Activated CD8-positive, alpha-beta memory T cell treated with anti-CD3 and anti-CD28 coated beads, Interleukin-2, amount 10 ng/mL, durations not matched to agents 7 days and 5 days (primary cell): ENCODE measurements at regions of chr11 and their contacts with region 1.

Region 1: GRCh38 chr11:13276832-13277767 is 490 bp upstream of the BMAL1 start:
- DNase-seq: peak; percentile 98
- ATAC-seq: peak; percentile 89
- H3K4me3 Mint-ChIP-seq: peak overlapping the region; percentile 92
- H3K27ac Mint-ChIP-seq: peak overlapping the region; percentile 89
- H3K4me1 Mint-ChIP-seq: peaks cover 45% of the 10 kb centered on the region
- H3K27me3 Mint-ChIP-seq: peaks cover 35% of the 10 kb centered on the region

Region 2: GRCh38 chr11:13297917-13298356 is 20.8 kb after region 1 on chr11:
- CTCF ChIA-PET with region 1: interaction called, 20 read pairs
- DNase-seq: peak; percentile 91
- ATAC-seq: peak; percentile 95
- H3K4me3 Mint-ChIP-seq: peak overlapping the region; percentile 12
- H3K27ac Mint-ChIP-seq: peak overlapping the region; percentile 90
- H3K4me1 Mint-ChIP-seq: peaks cover 66% of the 10 kb centered on the region
- H3K27me3 Mint-ChIP-seq: no peaks in the 10 kb centered on the region